Right ventricle myocardium superior (tissue), 1 donor: ENCODE measurements at regions of chr3 and their contacts with region 1.

Region 1: DNA sequence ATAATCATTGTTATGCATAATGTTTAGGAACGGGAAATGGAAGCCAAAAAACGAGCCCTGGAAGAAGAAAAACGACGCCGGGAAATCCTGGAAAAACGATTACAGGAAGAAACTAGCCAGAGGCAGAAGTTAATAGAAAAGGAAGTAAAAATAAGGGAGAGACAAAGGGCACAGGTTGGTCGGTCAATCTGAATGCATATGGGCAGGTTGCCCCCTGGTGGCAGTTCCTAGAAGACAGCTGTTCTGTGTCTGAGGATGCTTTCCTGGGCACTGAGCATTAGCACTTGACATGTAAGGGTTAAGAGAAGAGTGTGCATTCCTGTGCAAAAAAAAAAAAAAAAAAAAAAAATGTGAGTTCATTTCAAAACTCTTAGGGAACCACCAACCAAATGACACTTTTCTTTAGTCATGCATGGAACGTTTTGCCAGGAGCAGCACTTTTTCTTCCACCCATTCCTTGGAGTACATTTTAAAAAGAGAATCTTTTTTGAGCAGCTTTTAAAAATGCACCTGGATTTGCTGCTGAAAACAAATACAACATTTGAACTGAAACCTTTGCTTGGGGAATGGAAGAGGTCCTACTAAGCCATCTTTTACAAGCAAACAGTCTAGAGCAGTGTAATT is 11.1 kb upstream of the ABHD10 start:
- DNase-seq: peak; percentile 83
- ATAC-seq: peak; percentile 86

Region 2: GRCh38 chr3:111717601-111718000 is 250.2 kb before region 1 on chr3:
- intact Hi-C with region 1: loop called (anchors 1 kb)
- DNase-seq: peak; percentile 76
- ATAC-seq: peak; percentile 93

Region 3: GRCh38 chr3:111882799-111883198 is 85.0 kb before region 1 on chr3:
- intact Hi-C with region 1: no loop called
- DNase-seq: no peak
- ATAC-seq: no peak